ENCODE measurements at regions of chr7 and their contacts with region 1.

Region 1: DNA sequence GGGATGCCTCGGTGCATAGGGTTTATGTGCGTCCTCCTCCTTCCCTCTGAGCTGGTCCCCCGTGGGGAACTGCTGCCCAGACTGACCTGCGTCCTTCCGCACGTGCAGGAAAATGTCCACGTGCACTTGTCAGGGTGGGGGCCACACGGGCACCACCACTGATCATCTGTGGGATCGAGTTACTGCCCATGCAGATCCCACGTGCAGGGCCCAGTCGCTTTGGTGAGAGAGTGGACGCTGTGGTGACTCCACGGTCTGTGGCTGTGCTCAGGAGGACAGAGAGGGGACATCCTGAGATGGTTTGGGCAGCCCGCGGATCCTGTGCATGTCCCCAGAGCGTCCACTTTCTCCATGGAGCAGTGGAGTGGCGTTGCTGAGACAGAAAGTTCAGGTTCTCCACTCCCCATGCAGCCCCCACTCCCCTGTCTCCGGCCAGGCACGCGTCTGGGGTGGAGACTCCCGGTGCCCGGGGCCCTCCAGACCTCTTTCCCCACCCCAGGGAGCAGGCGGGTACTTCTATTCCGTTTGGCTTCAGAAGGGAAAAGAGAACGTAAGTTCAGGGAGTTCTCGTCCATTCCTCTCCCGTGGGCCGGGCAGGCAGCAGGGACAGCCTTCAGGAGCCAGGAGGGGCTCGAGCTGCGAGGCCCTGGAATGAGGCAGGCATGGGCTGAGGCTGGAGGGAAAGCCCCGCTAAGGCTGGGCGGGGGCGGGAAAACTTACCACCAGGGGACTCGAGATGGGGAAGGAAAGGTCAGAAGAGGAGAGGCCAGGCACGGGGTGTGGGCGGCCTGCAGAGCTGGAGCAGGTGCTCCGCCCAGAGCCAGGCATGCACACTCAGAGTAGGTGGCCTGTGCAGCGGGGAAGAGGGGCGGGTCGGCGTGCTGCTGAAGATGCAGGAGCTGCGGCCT is 59.9 kb downstream of the EGFR start:
- DNase-seq: no peak
- ATAC-seq: no peak
- H3K4me3 ChIP-seq: no peak overlapping the region
- H3K27ac ChIP-seq: peak overlapping the region in 2 of 3 donors; percentile 83 to 88
- H3K4me1 ChIP-seq: peaks cover 0 to 86% (median 38%) of the 10 kb centered on the region in 4 donors
- H3K27me3 ChIP-seq: no peaks in the 10 kb centered on the region
- CTCF ChIP-seq: no peak
- POLR2A ChIP-seq: no peak

Region 2: GRCh38 chr7:55019691-55020465 is 58.8 kb before region 1 on chr7:
- intact Hi-C with region 1: loop called in 1 of 2 experiments (anchors 5 kb)
- DNase-seq: peak; percentile 35 to 64 (median 56)
- ATAC-seq: peak; percentile 3 to 28 (median 16)
- H3K4me3 ChIP-seq: peak overlapping the region; percentile 66 to 82 (median 79)
- H3K27ac ChIP-seq: peak overlapping the region; percentile 94 to 99 (median 98)
- H3K4me1 ChIP-seq: peaks cover 0 to 18% (median 4%) of the 10 kb centered on the region in 4 donors
- H3K27me3 ChIP-seq: no peaks in the 10 kb centered on the region
- CTCF ChIP-seq: no peak
- POLR2A ChIP-seq: no peak